GM23248 (cell line): ENCODE measurements at regions of chr19 and their contacts with region 1.

Region 1: DNA sequence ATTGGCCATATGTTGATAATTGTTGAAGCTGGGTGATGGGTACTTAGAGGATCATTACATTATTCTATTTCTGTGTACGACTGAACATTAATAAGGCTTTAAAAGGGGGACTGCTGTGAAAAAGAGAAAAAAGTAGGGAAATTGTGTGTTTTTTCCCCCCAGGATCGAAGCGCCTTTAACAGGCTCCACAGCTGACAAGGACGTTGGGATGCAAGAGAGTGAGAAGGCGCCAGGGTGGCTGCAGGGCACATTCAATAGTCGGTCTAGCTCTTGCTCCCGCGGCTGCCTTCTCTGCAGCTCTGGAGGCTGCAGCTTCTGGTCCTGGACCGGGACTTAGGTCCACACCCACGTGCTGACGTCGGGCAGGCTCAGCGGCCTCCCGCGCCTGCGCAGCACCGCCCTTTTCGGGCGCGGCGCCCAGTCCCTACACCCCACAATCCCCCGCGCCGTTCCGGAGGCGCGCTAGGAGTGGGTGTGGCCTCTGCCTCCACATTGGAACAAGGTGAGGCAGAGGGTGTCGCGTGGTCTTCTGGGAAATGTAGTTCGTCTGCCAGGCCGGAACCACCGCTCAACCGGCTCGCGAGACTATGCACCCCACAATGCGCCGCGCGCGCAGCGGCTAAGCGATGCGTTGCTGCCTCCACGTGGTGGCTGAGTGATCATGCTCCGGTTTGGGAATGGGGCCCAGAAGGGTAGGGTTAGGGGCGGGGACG is 4.9 kb upstream of the LRFN3 start:
- DNase-seq: peak; percentile 99
- H3K4me3 ChIP-seq: peak overlapping the region; percentile 60
- H3K27ac ChIP-seq: peak overlapping the region; percentile 21; the same call in 1 of the 2 replicates
- H3K4me1 ChIP-seq: peaks cover 6% of the 10 kb centered on the region
- H3K27me3 ChIP-seq: no peaks in the 10 kb centered on the region

Region 2: DNA sequence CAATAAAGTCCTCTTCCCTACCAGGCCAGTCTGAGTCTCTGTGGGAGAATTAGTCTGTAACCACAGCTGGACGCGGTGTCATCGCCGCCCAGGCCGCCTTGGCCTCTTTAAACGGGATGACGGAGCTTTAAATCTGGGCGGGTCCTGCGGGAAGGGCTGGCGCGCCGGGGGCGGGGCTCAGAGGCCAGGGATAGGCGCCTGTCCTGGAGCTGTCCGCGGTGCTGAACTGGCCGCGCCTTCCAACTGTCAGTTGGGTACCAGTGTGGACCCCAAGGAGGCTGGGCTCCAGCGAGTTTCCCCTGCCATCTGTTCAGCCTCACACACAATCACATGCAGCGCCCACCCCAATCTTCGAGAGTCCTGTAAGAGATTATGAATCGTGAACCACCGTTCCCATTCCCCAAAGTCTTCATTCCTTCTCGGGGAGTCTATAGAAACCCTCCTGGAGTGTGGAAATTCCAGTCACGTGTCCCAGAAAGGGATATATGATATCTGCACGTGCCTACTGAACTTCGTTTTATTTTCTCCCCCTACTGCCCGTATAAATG is 51.5 kb before region 1 on chr19:
- in situ Hi-C with region 1: loop called (anchors 5 kb)
- DNase-seq: peak; percentile 99
- H3K4me3 ChIP-seq: no peak overlapping the region
- H3K27ac ChIP-seq: no peak overlapping the region
- H3K4me1 ChIP-seq: peaks cover 4% of the 10 kb centered on the region; the same call in 1 of the 2 replicates
- H3K27me3 ChIP-seq: no peaks in the 10 kb centered on the region